Kidney (tissue), 22 donors: ENCODE measurements at regions of chr6 and their contacts with region 1.

Region 1: DNA sequence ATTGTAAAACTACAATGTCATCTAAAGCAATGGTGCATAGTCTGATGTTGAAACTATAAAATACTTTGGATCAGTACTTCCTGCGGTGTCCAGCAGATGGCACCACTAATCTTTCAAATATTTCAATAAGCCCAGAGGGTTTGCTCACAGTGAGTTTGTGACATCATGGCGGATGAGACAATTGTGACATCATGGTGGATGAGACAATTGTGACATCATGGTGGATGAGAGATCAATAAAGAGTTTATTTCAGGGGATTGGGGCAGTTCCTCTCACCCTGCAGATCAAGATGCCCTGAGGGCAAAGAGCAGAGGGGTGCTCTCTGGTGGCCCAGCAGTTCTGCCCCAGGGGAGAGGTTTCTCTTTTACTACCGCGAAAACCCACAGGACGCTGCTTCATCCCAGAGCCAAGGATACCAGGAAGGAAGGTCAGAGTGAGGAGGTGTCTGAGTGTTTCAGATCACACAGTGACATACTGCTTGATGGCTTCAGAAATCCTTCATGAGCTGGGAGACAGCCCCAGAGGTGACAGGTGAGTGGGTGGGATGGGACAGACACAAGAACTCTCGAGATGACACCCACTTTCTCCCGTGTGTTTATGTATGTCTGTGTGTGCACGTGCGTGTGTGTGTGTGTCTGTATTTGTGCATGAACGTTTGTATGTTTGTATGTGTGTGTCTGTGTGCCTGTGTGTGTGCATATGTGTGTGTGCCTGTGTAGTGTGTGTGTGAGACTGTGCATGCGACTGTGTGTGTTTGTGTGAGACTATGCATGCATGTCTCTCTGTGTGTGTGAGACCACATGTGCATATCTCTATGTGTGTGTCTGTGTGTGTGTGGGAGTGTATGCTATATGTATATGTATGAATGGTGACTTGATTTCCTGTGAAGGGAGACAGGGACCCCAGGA is 7.3 kb upstream of the ULBP2 start:
- DNase-seq: peak; percentile 36 to 85 (median 73)
- H3K4me3 ChIP-seq: no peak overlapping the region
- H3K27ac ChIP-seq: no peak overlapping the region
- H3K4me1 ChIP-seq: peaks cover 0 to 9% (median 3%) of the 10 kb centered on the region in 3 donors
- H3K27me3 ChIP-seq: peaks cover 45% of the 10 kb centered on the region
- CTCF ChIP-seq: peak; percentile 83

Region 2: DNA sequence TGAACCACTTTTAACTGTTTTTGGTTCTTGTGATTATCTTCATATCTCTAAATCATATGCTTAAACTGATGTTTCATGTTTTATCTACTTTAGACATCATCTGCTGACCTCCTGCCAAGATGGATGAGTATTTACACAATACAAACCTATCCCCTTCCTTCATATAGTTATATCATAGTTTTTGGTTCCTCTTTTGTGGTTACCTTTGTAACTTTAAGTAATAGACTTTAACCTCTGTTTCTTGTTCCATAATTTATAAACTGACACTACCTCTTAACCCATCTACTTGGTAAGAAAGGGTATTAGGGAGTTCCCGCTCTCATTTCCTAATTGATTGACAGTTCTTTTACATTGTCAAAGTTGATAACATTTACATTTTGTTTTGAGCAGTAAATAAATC is 173.1 kb before region 1 on chr6:
- intact Hi-C with region 1: no loop called
- DNase-seq: no peak
- H3K4me3 ChIP-seq: no peak overlapping the region
- H3K27ac ChIP-seq: no peak overlapping the region
- H3K4me1 ChIP-seq: no peaks in the 10 kb centered on the region
- H3K27me3 ChIP-seq: no peaks in the 10 kb centered on the region
- CTCF ChIP-seq: no peak

Region 3: GRCh38 chr6:150004783-150005717 is 70.5 kb after region 1 on chr6:
- intact Hi-C with region 1: loop called (anchors 5 kb)
- DNase-seq: peak; percentile 93 to 98 (median 94)
- H3K4me3 ChIP-seq: peak overlapping the region; percentile 58 to 71 (median 62)
- H3K27ac ChIP-seq: no peak overlapping the region
- H3K4me1 ChIP-seq: peaks cover 0 to 6% (median 0%) of the 10 kb centered on the region in 3 donors
- H3K27me3 ChIP-seq: peaks cover 13% of the 10 kb centered on the region
- CTCF ChIP-seq: no peak

Region 4: GRCh38 chr6:150016324-150017185 is 82.1 kb after region 1 on chr6:
- intact Hi-C with region 1: loop called (anchors 5 kb)
- DNase-seq: peak in 3 of 5 donors; percentile 64 to 84 (median 84)
- H3K4me3 ChIP-seq: no peak overlapping the region
- H3K27ac ChIP-seq: no peak overlapping the region
- H3K4me1 ChIP-seq: no peaks in the 10 kb centered on the region
- H3K27me3 ChIP-seq: peaks cover 31% of the 10 kb centered on the region
- CTCF ChIP-seq: peak; percentile 61